ENCODE measurements at regions of chr2 and their contacts with region 1.

Region 1: DNA sequence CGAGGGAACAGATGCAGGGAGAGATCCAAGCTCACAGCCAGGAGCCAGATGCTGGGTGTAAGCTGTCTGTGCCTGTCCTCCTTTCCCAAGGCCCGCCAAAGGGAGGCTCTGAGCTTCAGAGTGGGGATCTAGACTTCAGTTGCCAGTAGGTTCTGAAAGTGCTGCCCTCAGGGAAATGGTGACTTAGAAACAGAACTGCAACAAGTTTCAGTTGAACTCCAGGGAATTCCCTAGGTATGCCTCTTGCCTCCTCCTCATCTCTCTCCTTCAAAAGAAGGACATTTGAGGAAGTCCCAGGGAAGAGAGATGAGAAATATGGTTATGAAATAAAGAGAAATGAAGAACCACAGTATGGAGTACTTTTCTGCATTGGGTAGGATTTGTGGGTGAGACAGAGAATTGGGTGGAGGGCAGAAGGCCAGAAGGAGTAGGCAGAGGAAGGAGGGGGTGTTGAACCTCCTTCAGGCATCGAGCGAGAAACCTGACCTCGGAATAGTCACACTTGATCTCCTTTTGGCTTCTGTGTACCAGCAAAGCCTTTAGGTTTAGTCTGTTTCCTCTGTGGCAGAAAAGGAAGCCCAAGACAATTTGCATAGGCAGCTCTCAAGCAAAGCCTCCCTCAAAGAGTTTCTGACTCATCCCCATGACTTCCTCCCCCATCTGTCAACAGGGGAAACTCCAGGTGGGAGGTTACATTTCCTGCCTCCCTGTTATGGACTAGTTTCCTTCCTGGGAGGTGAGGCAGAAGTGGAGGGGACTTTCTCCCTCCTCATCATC is 45.7 kb downstream of the QPCT start:
- DNase-seq: peak in 8 of 9 experiments; percentile 28 to 89 (median 64)
- ATAC-seq: peak; percentile 93
- H3K4me3 ChIP-seq: no peak overlapping the region
- H3K4me3 Mint-ChIP-seq: peak overlapping the region; percentile 0
- H3K27ac ChIP-seq: peak overlapping the region in 1 of 2 experiments; percentile 67
- H3K27ac Mint-ChIP-seq: peak overlapping the region; percentile 80
- H3K4me1 ChIP-seq: peaks cover 23% of the 10 kb centered on the region
- H3K4me1 Mint-ChIP-seq: peaks cover 3% of the 10 kb centered on the region
- H3K27me3 ChIP-seq: no peaks in the 10 kb centered on the region
- H3K27me3 Mint-ChIP-seq: no peaks in the 10 kb centered on the region
- CTCF ChIP-seq: no peak

Region 2: GRCh38 chr2:37196320-37197195 is 193.6 kb before region 1 on chr2 and contains the start of gene CEBPZOS:
- CTCF ChIA-PET with region 1: no interaction called
- POLR2A ChIA-PET with region 1: no interaction called
- intact Hi-C with region 1: loop called in 1 of 2 experiments (anchors 1 kb)
- DNase-seq: peak; percentile 81 to 96 (median 91)
- ATAC-seq: peak; percentile 89
- H3K4me3 ChIP-seq: peak within 1 kb of the TSS; percentile 74 to 78
- H3K4me3 Mint-ChIP-seq: peak within 1 kb of the TSS; percentile 96
- H3K27ac ChIP-seq: peak within 1 kb of the TSS; percentile 74 to 78
- H3K27ac Mint-ChIP-seq: peak within 1 kb of the TSS; percentile 96
- H3K4me1 ChIP-seq: peaks cover 24% of the 10 kb centered on the region
- H3K4me1 Mint-ChIP-seq: peaks cover 35% of the 10 kb centered on the region
- H3K27me3 ChIP-seq: no peaks in the 10 kb centered on the region
- H3K27me3 Mint-ChIP-seq: no peaks in the 10 kb centered on the region
- CTCF ChIP-seq: no peak
- total RNA-seq, gene CEBPZOS: 17.5 to 18.2 TPM

Region 3: GRCh38 chr2:37244017-37244416 is 146.2 kb before region 1 on chr2:
- CTCF ChIA-PET with region 1: no interaction called
- POLR2A ChIA-PET with region 1: no interaction called
- intact Hi-C with region 1: no loop called
- DNase-seq: no peak
- ATAC-seq: no peak
- H3K4me3 ChIP-seq: no peak overlapping the region
- H3K4me3 Mint-ChIP-seq: no peak overlapping the region
- H3K27ac ChIP-seq: no peak overlapping the region
- H3K27ac Mint-ChIP-seq: no peak overlapping the region
- H3K4me1 ChIP-seq: no peaks in the 10 kb centered on the region
- H3K4me1 Mint-ChIP-seq: peaks cover 2% of the 10 kb centered on the region
- H3K27me3 ChIP-seq: no peaks in the 10 kb centered on the region
- H3K27me3 Mint-ChIP-seq: no peaks in the 10 kb centered on the region
- CTCF ChIP-seq: no peak

Region 4: GRCh38 chr2:37344453-37345361 is 45.5 kb before region 1 on chr2 and contains the start of gene QPCT:
- CTCF ChIA-PET with region 1: no interaction called
- POLR2A ChIA-PET with region 1: no interaction called
- intact Hi-C with region 1: loop called in 1 of 2 experiments (anchors 5 kb)
- DNase-seq: peak; percentile 47 to 85 (median 76)
- ATAC-seq: peak; percentile 88
- H3K4me3 ChIP-seq: peak within 1 kb of the TSS; percentile 52 to 55
- H3K4me3 Mint-ChIP-seq: peak within 1 kb of the TSS; percentile 83
- H3K27ac ChIP-seq: no peak within 1 kb of the TSS
- H3K27ac Mint-ChIP-seq: peak within 1 kb of the TSS; percentile 67
- H3K4me1 ChIP-seq: peaks cover 4% of the 10 kb centered on the region
- H3K4me1 Mint-ChIP-seq: peaks cover 17% of the 10 kb centered on the region
- H3K27me3 ChIP-seq: no peaks in the 10 kb centered on the region
- H3K27me3 Mint-ChIP-seq: peaks cover 10% of the 10 kb centered on the region
- CTCF ChIP-seq: no peak
- total RNA-seq, gene QPCT: 0.57 to 1.00 TPM

Region 5: GRCh38 chr2:37365669-37366068 is 24.5 kb before region 1 on chr2:
- CTCF ChIA-PET with region 1: no interaction called
- POLR2A ChIA-PET with region 1: no interaction called
- intact Hi-C with region 1: no loop called
- DNase-seq: peak in 2 of 9 experiments; percentile 18 to 42
- ATAC-seq: peak; percentile 51
- H3K4me3 ChIP-seq: no peak overlapping the region
- H3K4me3 Mint-ChIP-seq: no peak overlapping the region
- H3K27ac ChIP-seq: no peak overlapping the region
- H3K27ac Mint-ChIP-seq: no peak overlapping the region
- H3K4me1 ChIP-seq: peaks cover 26% of the 10 kb centered on the region
- H3K4me1 Mint-ChIP-seq: peaks cover 12% of the 10 kb centered on the region
- H3K27me3 ChIP-seq: no peaks in the 10 kb centered on the region
- H3K27me3 Mint-ChIP-seq: peaks cover 18% of the 10 kb centered on the region
- CTCF ChIP-seq: no peak

Region 6: GRCh38 chr2:37537316-37537715 is 147.1 kb after region 1 on chr2:
- CTCF ChIA-PET with region 1: interaction called, 4 read pairs
- POLR2A ChIA-PET with region 1: no interaction called
- intact Hi-C with region 1: loop called in 1 of 2 experiments (anchors 5 kb)
- DNase-seq: no peak
- ATAC-seq: no peak
- H3K4me3 ChIP-seq: no peak overlapping the region
- H3K4me3 Mint-ChIP-seq: no peak overlapping the region
- H3K27ac ChIP-seq: no peak overlapping the region
- H3K27ac Mint-ChIP-seq: no peak overlapping the region
- H3K4me1 ChIP-seq: no peaks in the 10 kb centered on the region
- H3K4me1 Mint-ChIP-seq: peaks cover 3% of the 10 kb centered on the region
- H3K27me3 ChIP-seq: no peaks in the 10 kb centered on the region
- H3K27me3 Mint-ChIP-seq: no peaks in the 10 kb centered on the region
- CTCF ChIP-seq: no peak

Region 7: DNA sequence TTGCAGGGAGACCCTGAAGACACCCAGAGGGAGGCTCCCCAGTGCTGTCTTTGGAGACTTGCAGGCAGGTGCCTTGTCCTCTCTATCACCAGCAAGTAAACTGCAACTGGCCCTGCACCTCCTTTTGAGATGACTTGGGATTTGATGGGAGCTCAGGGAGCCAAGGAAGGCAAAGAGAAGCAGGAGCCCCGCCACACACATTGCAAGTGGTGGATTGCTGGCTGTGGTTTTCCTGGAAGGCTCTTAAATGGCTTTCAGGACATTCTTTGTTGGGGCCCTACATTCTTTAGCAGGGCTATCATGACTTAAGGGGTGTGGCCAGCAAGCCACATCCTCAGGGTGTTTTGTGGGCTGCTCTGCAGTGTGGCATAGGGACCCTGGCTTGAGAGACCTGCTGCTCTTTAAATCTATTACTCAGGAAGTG is 321.1 kb after region 1 on chr2:
- CTCF ChIA-PET with region 1: no interaction called
- POLR2A ChIA-PET with region 1: no interaction called
- intact Hi-C with region 1: no loop called
- DNase-seq: peak in 8 of 9 experiments; percentile 17 to 70 (median 44)
- ATAC-seq: peak; percentile 83
- H3K4me3 ChIP-seq: no peak overlapping the region
- H3K4me3 Mint-ChIP-seq: peak overlapping the region; percentile 35
- H3K27ac ChIP-seq: peak overlapping the region in 1 of 2 experiments; percentile 3
- H3K27ac Mint-ChIP-seq: peak overlapping the region; percentile 71
- H3K4me1 ChIP-seq: peaks cover 27% of the 10 kb centered on the region
- H3K4me1 Mint-ChIP-seq: peaks cover 38% of the 10 kb centered on the region
- H3K27me3 ChIP-seq: no peaks in the 10 kb centered on the region
- H3K27me3 Mint-ChIP-seq: no peaks in the 10 kb centered on the region
- CTCF ChIP-seq: no peak

Region 8: DNA sequence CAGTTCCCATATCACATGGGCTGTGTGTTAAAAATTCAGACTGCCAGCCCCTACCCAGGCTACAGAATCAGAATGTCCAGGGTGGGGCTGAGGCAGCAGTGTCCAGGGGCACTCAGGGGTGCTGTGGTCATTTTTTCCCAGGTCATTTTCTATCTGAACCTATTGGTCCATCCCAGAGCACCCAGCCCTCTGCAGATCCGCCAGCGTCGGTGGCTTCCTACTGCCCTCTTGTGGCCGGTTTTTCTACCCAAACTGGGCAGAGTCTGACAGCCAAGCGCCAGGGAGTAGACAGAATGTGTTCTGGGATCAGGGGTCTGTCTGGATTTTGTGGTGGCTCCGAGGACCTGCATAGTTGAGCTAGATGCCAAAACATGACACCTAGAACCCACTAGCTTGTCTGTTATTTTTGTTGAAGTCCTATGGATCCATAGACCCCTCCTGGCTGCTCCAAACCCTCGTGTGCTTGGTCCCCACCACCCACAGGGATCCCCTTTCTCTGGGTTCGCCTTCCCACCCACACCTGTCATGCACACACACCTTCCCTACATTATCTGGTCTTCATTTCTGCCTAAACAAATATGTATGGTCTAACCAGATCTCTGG is 500.8 kb after region 1 on chr2:
- CTCF ChIA-PET with region 1: interaction called, 10 read pairs
- POLR2A ChIA-PET with region 1: no interaction called
- intact Hi-C with region 1: loop called in 1 of 2 experiments (anchors 5 kb)
- DNase-seq: peak; percentile 27 to 75 (median 68)
- ATAC-seq: peak; percentile 57
- H3K4me3 ChIP-seq: no peak overlapping the region
- H3K4me3 Mint-ChIP-seq: no peak overlapping the region
- H3K27ac ChIP-seq: no peak overlapping the region
- H3K27ac Mint-ChIP-seq: no peak overlapping the region
- H3K4me1 ChIP-seq: peaks cover 36% of the 10 kb centered on the region
- H3K4me1 Mint-ChIP-seq: peaks cover 40% of the 10 kb centered on the region
- H3K27me3 ChIP-seq: peaks cover 0 to 2% of the 10 kb centered on the region in 2 experiments
- H3K27me3 Mint-ChIP-seq: peaks cover 2% of the 10 kb centered on the region
- CTCF ChIP-seq: peak; percentile 67

Region 9: GRCh38 chr2:38377050-38377828 is 987.1 kb after region 1 on chr2 and contains the start of gene ATL2:
- CTCF ChIA-PET with region 1: no interaction called
- POLR2A ChIA-PET with region 1: no interaction called
- intact Hi-C with region 1: loop called in 1 of 2 experiments (anchors 10 kb)
- DNase-seq: peak; percentile 87 to 96 (median 93)
- ATAC-seq: peak; percentile 80
- H3K4me3 ChIP-seq: peak within 1 kb of the TSS; percentile 71 to 93
- H3K4me3 Mint-ChIP-seq: peak within 1 kb of the TSS; percentile 97
- H3K27ac ChIP-seq: peak within 1 kb of the TSS; percentile 84 to 91
- H3K27ac Mint-ChIP-seq: peak within 1 kb of the TSS; percentile 96
- H3K4me1 ChIP-seq: peaks cover 35% of the 10 kb centered on the region
- H3K4me1 Mint-ChIP-seq: peaks cover 69% of the 10 kb centered on the region
- H3K27me3 ChIP-seq: no peaks in the 10 kb centered on the region
- H3K27me3 Mint-ChIP-seq: no peaks in the 10 kb centered on the region
- CTCF ChIP-seq: no peak
- total RNA-seq, gene ATL2: 76.4 to 88.2 TPM